Activated T-helper 2 cell treated with anti-CD3 and anti-CD28 coated beads, Interferon-gamma antibody, Interleukin-2, Interleukin-4, amounts not matched to agents 10 μg/mL and 5 μg/mL and 100 μg/mL, durations not matched to agents 14 hours and 24 hours and 36 hours (primary cell): ENCODE measurements at regions of chr6 and their contacts with region 1.

Region 1: GRCh38 chr6:166627033-166627874 is at the start of gene RPS6KA2:
- DNase-seq: peak; percentile 100
- H3K4me3 Mint-ChIP-seq: peak within 1 kb of the TSS; percentile 81
- H3K27ac Mint-ChIP-seq: peak within 1 kb of the TSS; percentile 59
- H3K4me1 Mint-ChIP-seq: peaks cover 23% of the 10 kb centered on the region
- H3K27me3 Mint-ChIP-seq: peaks cover 57% of the 10 kb centered on the region
- total RNA-seq, gene RPS6KA2: 2.1 and 2.2 TPM in 2 replicates

Region 2: GRCh38 chr6:166275714-166276166 is 351.5 kb before region 1 on chr6:
- intact Hi-C with region 1: loop called (anchors 10 kb)
- DNase-seq: peak; percentile 68
- H3K4me3 Mint-ChIP-seq: no peak overlapping the region
- H3K27ac Mint-ChIP-seq: no peak overlapping the region
- H3K4me1 Mint-ChIP-seq: peaks cover 6% of the 10 kb centered on the region
- H3K27me3 Mint-ChIP-seq: peaks cover 24% of the 10 kb centered on the region

Region 3: GRCh38 chr6:166382933-166383801 is 244.1 kb before region 1 on chr6 and contains the start of gene MPC1:
- intact Hi-C with region 1: loop called (anchors 1 kb)
- DNase-seq: peak; percentile 93
- H3K4me3 Mint-ChIP-seq: peak within 1 kb of the TSS; percentile 89
- H3K27ac Mint-ChIP-seq: peak within 1 kb of the TSS; percentile 69
- H3K4me1 Mint-ChIP-seq: peaks cover 9% of the 10 kb centered on the region
- H3K27me3 Mint-ChIP-seq: peaks cover 2% of the 10 kb centered on the region
- total RNA-seq, gene MPC1: 20.3 and 21.1 TPM in 2 replicates

Region 4: GRCh38 chr6:166540631-166541331 is 86.5 kb before region 1 on chr6:
- intact Hi-C with region 1: loop called (anchors 5 kb)
- DNase-seq: peak; percentile 47
- H3K4me3 Mint-ChIP-seq: peak overlapping the region; percentile 60
- H3K27ac Mint-ChIP-seq: peak overlapping the region; percentile 77
- H3K4me1 Mint-ChIP-seq: peaks cover 19% of the 10 kb centered on the region
- H3K27me3 Mint-ChIP-seq: no peaks in the 10 kb centered on the region

Region 5: GRCh38 chr6:166572370-166573261 is 54.6 kb before region 1 on chr6:
- intact Hi-C with region 1: no loop called
- DNase-seq: no peak
- H3K4me3 Mint-ChIP-seq: no peak overlapping the region
- H3K27ac Mint-ChIP-seq: no peak overlapping the region
- H3K4me1 Mint-ChIP-seq: no peaks in the 10 kb centered on the region
- H3K27me3 Mint-ChIP-seq: no peaks in the 10 kb centered on the region

Region 6: DNA sequence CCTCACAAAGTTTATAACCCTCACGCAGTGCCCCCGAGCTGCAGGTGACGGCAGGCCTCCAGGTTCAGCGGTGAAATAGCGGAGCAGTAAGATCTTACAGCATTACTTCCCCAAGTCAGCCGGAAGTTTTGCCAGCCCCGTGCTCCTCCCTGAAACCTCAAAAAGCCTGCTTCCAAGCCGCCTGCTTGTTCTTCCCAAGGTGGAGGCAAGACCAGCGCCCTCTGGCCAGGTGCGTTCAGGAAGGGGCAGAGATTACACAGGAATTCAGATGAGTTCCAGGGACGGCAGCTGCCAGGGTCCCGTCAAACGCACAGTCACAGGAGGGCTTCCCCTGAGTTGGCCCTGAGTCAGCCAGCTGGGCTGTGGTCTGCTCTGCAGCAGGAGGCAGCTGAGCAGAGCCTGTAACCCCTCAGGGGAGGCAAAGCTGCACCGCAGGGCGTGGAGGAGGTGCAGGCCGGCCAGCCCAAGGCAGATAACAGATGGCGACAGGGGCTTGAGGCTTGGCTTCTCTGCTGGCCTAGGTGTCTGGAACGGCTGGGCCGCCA is 123.9 kb after region 1 on chr6:
- intact Hi-C with region 1: no loop called
- DNase-seq: no peak
- H3K4me3 Mint-ChIP-seq: no peak overlapping the region
- H3K27ac Mint-ChIP-seq: no peak overlapping the region
- H3K4me1 Mint-ChIP-seq: no peaks in the 10 kb centered on the region
- H3K27me3 Mint-ChIP-seq: peaks cover 21% of the 10 kb centered on the region

Region 7: GRCh38 chr6:166950443-166950821 is 323.2 kb after region 1 on chr6:
- intact Hi-C with region 1: loop called (anchors 2 kb)
- DNase-seq: peak; percentile 36
- H3K4me3 Mint-ChIP-seq: peak overlapping the region; percentile 73
- H3K27ac Mint-ChIP-seq: peak overlapping the region; percentile 86
- H3K4me1 Mint-ChIP-seq: peaks cover 54% of the 10 kb centered on the region
- H3K27me3 Mint-ChIP-seq: no peaks in the 10 kb centered on the region

Region 8: GRCh38 chr6:167350731-167351655 is 723.7 kb after region 1 on chr6:
- intact Hi-C with region 1: loop called (anchors 2 kb)
- DNase-seq: peak; percentile 79
- H3K4me3 Mint-ChIP-seq: peak overlapping the region; percentile 79
- H3K27ac Mint-ChIP-seq: peak overlapping the region; percentile 84
- H3K4me1 Mint-ChIP-seq: peaks cover 15% of the 10 kb centered on the region
- H3K27me3 Mint-ChIP-seq: peaks cover 32% of the 10 kb centered on the region